Mammary epithelial cell (primary cell): ENCODE measurements at regions of chr7 and their contacts with region 1.

Region 1: DNA sequence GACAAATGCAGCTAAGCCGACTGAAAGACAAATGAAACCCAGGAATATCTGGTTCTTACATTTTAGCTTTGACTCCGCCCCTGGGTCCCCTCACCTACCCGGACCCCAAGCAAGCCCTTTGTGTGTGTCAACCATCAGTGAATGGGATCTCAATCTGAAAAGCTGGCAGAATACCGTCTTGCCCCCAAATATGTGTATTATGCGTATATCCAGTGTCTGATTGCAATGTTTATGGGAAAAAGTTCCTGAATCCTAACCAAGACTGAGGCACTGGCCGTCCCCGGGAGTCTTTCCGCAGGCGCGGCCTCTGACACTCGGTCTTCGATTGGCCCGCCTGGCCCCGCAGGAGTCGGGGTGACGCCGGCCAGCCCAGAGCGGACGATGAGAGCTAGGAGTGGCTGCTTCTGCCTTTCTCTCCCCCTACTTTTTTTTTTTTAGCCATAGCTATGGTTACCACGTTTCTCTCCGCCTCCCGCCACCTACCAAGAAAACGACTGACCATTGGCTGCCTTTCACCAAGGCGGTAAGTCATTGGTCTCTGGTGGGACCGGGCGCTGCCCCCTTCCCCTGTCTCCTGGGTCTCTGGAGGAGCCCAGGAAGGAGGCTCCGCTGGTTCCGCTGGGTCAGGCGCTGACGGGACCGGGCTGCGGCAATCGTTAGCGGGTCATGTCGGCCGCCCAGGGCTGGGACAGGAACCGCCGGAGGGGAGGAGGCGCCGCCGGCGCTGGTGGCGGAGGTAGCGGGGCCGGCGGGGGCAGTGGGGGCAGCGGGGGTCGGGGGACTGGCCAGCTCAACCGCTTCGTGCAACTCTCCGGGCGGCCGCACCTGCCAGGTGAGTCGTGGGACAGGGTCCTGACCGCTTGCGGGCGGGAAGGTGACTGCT is at the start of gene KLHDC10:
- DNase-seq: peak; percentile 98
- H3K4me3 ChIP-seq: peak within 1 kb of the TSS; percentile 51 to 83 (median 69)
- H3K27ac ChIP-seq: peak within 1 kb of the TSS; percentile 65
- H3K4me1 ChIP-seq: peaks cover 14% of the 10 kb centered on the region
- H3K27me3 ChIP-seq: no peaks in the 10 kb centered on the region
- CTCF ChIP-seq: no peak
- total RNA-seq, gene KLHDC10: 22.3 to 23.3 TPM

Region 2: GRCh38 chr7:128940494-128941322 is 1129.5 kb before region 1 on chr7:
- CTCF ChIA-PET with region 1: interaction called, 10 read pairs
- dilution Hi-C with region 1: no loop called
- in situ Hi-C with region 1: no loop called
- intact Hi-C with region 1: no loop called
- DNase-seq: no peak
- H3K4me3 ChIP-seq: no peak overlapping the region
- H3K27ac ChIP-seq: no peak overlapping the region
- H3K4me1 ChIP-seq: peaks cover 12% of the 10 kb centered on the region
- H3K27me3 ChIP-seq: no peaks in the 10 kb centered on the region
- CTCF ChIP-seq: no peak

Region 3: GRCh38 chr7:129807863-129808262 is 262.4 kb before region 1 on chr7:
- CTCF ChIA-PET with region 1: no interaction called
- dilution Hi-C with region 1: no loop called
- in situ Hi-C with region 1: no loop called
- intact Hi-C with region 1: no loop called
- DNase-seq: no peak
- H3K4me3 ChIP-seq: no peak overlapping the region
- H3K27ac ChIP-seq: no peak overlapping the region
- H3K4me1 ChIP-seq: no peaks in the 10 kb centered on the region
- H3K27me3 ChIP-seq: no peaks in the 10 kb centered on the region
- CTCF ChIP-seq: no peak

Region 4: GRCh38 chr7:130242198-130243014 is 172.2 kb after region 1 on chr7:
- CTCF ChIA-PET with region 1: no interaction called
- dilution Hi-C with region 1: no loop called
- in situ Hi-C with region 1: no loop called
- intact Hi-C with region 1: loop called (anchors 1 kb)
- DNase-seq: peak; percentile 93
- H3K4me3 ChIP-seq: no peak overlapping the region
- H3K27ac ChIP-seq: peak overlapping the region; percentile 76
- H3K4me1 ChIP-seq: peaks cover 13% of the 10 kb centered on the region
- H3K27me3 ChIP-seq: no peaks in the 10 kb centered on the region
- CTCF ChIP-seq: peak; percentile 78 to 89

Region 5: DNA sequence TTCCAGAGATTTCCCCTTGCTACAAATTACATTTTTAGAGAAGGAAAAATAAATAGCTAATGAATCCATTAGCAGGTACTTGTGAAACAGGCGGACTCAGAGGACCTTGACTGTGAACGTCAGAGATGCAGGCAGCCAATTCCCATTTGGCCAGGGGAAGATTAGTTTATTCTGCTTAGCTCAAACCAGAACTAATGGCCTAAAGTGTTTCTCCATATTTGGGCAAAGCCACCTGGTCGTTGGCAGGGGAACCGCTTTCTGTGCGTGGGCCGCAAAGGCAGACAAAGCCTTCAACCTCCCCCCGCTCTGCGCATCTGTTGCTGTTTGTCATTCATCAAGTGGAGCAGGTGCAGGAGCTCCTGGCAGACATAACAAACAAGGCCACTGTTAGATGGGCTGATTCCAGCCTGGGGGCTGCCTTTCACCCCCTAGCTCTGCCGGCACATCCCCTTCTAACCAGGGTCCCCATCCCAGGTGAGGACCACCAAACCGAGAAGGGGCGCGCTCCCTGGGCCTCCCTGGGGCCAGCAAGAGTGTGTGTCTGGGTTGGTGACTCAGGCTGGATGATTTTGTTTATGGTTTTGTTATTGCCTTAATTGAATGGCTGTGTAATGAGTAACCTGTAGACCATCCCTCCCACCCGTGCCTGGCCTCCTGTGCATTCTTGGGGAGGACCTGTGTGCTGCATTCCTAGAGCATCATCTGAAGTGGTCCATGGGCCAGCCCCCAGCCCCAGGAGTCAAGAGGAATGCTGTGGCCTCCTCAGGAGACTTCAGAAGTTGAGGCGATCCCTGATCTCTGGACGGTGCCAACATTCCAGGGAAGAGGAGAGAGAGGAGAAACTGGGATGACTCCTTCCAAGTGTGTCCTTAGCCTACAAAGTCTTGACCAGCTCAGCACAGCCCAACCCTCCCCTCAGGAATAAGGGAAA is 295.6 kb after region 1 on chr7:
- CTCF ChIA-PET with region 1: no interaction called
- dilution Hi-C with region 1: no loop called
- in situ Hi-C with region 1: no loop called
- intact Hi-C with region 1: loop called (anchors 5 kb)
- DNase-seq: peak; percentile 70
- H3K4me3 ChIP-seq: no peak overlapping the region
- H3K27ac ChIP-seq: no peak overlapping the region
- H3K4me1 ChIP-seq: peaks cover 56% of the 10 kb centered on the region
- H3K27me3 ChIP-seq: no peaks in the 10 kb centered on the region
- CTCF ChIP-seq: no peak

Region 6: GRCh38 chr7:130695840-130696239 is 625.6 kb after region 1 on chr7:
- CTCF ChIA-PET with region 1: no interaction called
- dilution Hi-C with region 1: no loop called
- in situ Hi-C with region 1: no loop called
- intact Hi-C with region 1: loop called (anchors 1 kb)
- DNase-seq: peak; percentile 6
- H3K4me3 ChIP-seq: no peak overlapping the region
- H3K27ac ChIP-seq: no peak overlapping the region
- H3K4me1 ChIP-seq: no peaks in the 10 kb centered on the region
- H3K27me3 ChIP-seq: no peaks in the 10 kb centered on the region
- CTCF ChIP-seq: peak; percentile 49 to 74

Region 7: DNA sequence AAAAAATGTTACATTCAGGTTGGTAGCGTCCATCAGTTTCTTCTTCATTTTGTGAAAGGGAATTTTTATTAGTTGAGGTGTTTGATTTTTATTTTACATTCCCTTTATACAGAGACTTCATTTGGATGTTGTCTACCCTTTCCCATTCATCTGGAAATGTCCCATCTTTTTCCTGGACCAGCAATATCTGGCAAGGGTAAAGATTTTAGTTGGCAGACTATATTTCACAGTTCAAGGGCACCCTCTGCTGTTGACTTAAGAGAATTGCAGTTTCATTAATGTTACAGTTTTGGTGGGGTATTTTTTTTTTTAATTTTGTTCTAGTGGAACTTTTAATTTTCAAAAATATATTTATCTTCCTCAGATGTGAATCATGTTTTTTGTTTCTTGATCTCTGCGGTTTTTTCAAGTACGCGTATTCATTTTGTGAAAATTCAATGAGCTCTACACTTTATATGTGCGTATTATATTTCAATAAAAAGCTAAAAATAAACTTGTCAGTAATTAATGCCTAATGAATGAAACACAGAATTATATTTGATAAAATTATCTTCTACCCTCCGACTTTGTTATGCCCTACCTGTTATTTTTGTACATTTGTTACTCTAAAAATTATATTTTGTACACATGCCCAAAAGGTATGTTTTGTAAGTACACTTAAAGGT is 761.7 kb after region 1 on chr7:
- CTCF ChIA-PET with region 1: no interaction called
- dilution Hi-C with region 1: no loop called
- in situ Hi-C with region 1: no loop called
- intact Hi-C with region 1: loop called (anchors 2 kb)
- DNase-seq: no peak
- H3K4me3 ChIP-seq: no peak overlapping the region
- H3K27ac ChIP-seq: no peak overlapping the region
- H3K4me1 ChIP-seq: peaks cover 3% of the 10 kb centered on the region
- H3K27me3 ChIP-seq: no peaks in the 10 kb centered on the region
- CTCF ChIP-seq: peak; percentile 61 to 73